HEK293 (cell line): ENCODE measurements at regions of chr12 and their contacts with region 1.

Region 1: DNA sequence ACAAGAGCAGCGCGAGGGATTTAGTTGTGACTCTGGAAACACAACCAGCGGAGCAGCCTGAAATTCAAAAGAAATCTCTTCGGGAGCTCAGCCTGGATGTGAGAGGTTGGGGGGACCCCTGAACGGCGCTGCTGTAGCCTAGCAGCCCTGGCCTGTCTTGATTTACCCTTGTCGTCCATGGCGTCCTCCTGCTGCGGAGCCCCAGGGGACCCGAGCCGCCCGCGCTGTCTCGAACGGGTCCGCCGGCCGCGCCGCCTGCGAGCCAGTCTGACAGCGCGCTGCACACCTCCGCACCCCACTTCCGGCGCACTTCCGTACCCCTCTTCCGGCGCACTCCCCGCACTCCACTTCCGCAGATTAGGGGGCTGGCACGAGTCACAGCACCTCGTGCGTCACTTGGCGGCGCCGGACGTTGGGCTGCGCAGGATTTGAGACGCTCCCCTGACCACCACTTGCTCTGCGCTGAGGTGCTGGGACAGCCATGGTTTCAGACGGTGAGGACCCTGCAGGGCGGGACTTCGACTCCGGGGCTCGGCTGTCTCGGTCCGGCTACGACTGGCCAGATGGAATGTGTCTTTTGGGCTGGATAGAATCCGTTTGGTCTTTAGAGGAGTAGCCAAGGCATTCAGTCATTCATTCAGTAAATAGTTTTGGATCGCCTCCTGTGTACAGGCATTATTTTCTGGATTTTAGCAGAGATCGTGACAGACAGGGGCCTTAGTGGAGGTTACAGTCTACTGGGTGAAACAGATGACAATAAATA is at the starts of genes EIF2B1 and GTF2H3:
- H3K4me3 ChIP-seq: peak within 1 kb of the TSS; percentile 71
- H3K27ac ChIP-seq: peak within 1 kb of the TSS; percentile 89
- H3K4me1 ChIP-seq: 0 out of 2 replicates have a peak, but pooled peaks cover 5% of the 10 kb centered on the region
- CTCF ChIP-seq: peak; percentile 58; the same call in 1 of the 2 replicates

Region 2: GRCh38 chr12:123614531-123614930 is 19.0 kb before region 1 on chr12:
- CTCF ChIA-PET with region 1: interaction called, 14 read pairs
- POLR2A ChIA-PET with region 1: no interaction called
- H3K4me3 ChIP-seq: no peak overlapping the region
- H3K27ac ChIP-seq: no peak overlapping the region
- H3K4me1 ChIP-seq: no peaks in the 10 kb centered on the region
- CTCF ChIP-seq: no peak